Calu3 (cell line): ENCODE measurements at regions of chr1 and their contacts with region 1.

Region 1: GRCh38 chr1:93680757-93681550 is 683 bp downstream of the BCAR3 start:
- DNase-seq: peak; percentile 83
- H3K4me3 Mint-ChIP-seq: peak overlapping the region; percentile 92
- H3K27ac Mint-ChIP-seq: peak overlapping the region; percentile 68
- H3K4me1 Mint-ChIP-seq: peaks cover 24% of the 10 kb centered on the region
- H3K27me3 Mint-ChIP-seq: no peaks in the 10 kb centered on the region
- CTCF ChIP-seq: peak; percentile 50

Region 2: DNA sequence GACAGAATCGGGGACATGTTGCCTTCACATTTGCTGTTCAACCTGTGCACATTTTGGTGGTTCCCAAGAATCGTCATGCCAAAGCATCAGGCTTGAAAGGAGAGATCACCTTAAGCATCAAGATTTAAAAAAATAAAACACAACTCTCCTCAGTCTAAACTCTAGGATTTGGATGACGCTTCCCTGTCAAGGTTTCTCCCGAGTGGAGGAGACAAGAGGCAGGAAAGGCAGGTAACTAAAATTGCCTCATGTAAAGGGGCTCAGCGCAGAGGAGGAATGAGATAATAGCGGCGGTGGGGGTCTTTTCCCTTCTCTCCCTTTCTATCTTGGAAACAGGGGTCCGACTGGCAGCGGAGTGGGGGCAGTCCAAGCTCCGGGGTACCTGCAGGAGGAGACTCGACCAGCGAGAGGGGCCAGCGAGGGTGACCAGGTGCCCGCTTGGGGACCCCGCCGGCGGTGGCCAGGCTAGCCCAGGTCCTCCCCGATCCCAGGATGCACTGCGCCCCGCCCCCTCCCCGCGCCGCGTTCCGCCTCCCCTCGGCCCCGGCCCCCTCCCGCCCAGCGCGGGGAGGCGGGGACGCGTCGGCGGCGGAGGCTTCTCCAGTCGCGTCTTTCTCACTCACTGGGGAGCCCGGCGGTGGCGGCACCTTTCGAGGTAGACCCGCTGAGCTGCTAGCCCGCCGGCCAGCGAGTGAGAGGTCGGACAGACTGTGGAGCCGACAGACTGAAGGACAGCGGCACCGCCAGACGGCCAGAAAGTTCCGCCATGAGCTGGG is 233.2 kb before region 1 on chr1 and contains the start of gene FNBP1L:
- CTCF ChIA-PET with region 1: no interaction called
- intact Hi-C with region 1: loop called (anchors 10 kb)
- DNase-seq: peak; percentile 89
- H3K4me3 Mint-ChIP-seq: peak within 1 kb of the TSS; percentile 98
- H3K27ac Mint-ChIP-seq: peak within 1 kb of the TSS; percentile 91
- H3K4me1 Mint-ChIP-seq: peaks cover 44% of the 10 kb centered on the region
- H3K27me3 Mint-ChIP-seq: no peaks in the 10 kb centered on the region
- CTCF ChIP-seq: no peak
- total RNA-seq, gene FNBP1L: 63.4 and 72.7 TPM in 2 replicates

Region 3: GRCh38 chr1:93629099-93630059 is 51.6 kb before region 1 on chr1:
- CTCF ChIA-PET with region 1: interaction called, 3 read pairs
- intact Hi-C with region 1: loop called (anchors 2 kb)
- DNase-seq: peak; percentile 49
- H3K4me3 Mint-ChIP-seq: no peak overlapping the region
- H3K27ac Mint-ChIP-seq: peak overlapping the region; percentile 7
- H3K4me1 Mint-ChIP-seq: peaks cover 38% of the 10 kb centered on the region
- H3K27me3 Mint-ChIP-seq: no peaks in the 10 kb centered on the region
- CTCF ChIP-seq: peak; percentile 77

Region 4: GRCh38 chr1:93964777-93965200 is 283.8 kb after region 1 on chr1:
- CTCF ChIA-PET with region 1: no interaction called
- intact Hi-C with region 1: no loop called
- DNase-seq: peak; percentile 49
- H3K4me3 Mint-ChIP-seq: peak overlapping the region; percentile 54
- H3K27ac Mint-ChIP-seq: peak overlapping the region; percentile 90
- H3K4me1 Mint-ChIP-seq: peaks cover 27% of the 10 kb centered on the region
- H3K27me3 Mint-ChIP-seq: no peaks in the 10 kb centered on the region
- CTCF ChIP-seq: no peak